PC-9 (cell line): ENCODE measurements at regions of chr7 and their contacts with region 1.

Region 1: DNA sequence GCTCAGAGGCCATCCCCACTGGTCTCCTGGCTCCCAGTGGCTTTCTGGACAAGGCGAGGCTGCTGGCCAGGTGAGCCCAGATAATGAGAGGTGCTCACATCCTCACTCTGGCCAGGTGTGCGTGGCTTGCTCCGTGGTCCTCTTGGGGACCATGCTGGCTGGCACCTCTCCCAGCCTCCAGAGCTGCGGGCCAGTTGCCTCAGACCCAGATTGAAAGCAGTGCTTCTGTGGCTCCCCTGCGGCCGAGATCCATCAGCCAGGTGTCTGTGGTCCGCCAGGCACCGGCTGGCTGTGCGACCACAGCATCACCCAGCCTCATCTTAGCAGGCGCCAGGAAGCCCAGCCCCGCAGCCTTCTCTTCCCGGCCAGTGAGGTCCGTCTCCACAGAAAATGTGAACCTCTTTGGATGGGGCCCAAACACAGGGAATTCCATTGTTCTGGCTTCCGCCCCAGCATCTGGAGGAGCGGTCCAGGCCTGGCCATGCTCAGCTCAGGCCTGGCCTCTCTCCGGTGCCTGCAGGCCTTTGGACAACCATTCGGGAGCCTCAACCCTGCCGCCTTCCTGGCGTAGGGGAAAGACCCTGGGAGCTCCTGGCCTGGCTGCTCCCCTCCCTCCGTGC is 5.2 kb upstream of the TTYH3 start:
- DNase-seq: no peak
- H3K4me3 ChIP-seq: no peak overlapping the region
- H3K27ac ChIP-seq: no peak overlapping the region
- H3K4me1 ChIP-seq: peaks cover 5% of the 10 kb centered on the region
- H3K27me3 ChIP-seq: no peaks in the 10 kb centered on the region
- CTCF ChIP-seq: no peak

Region 2: GRCh38 chr7:1459522-1459892 is 1167.1 kb before region 1 on chr7:
- CTCF ChIA-PET with region 1: no interaction called
- POLR2A ChIA-PET with region 1: interaction called, 17 read pairs
- intact Hi-C with region 1: no loop called
- DNase-seq: peak; percentile 92 to 100
- H3K4me3 ChIP-seq: peak overlapping the region; percentile 97; the same call in 1 of the 2 replicates
- H3K27ac ChIP-seq: no peak overlapping the region
- H3K4me1 ChIP-seq: peaks cover 39% of the 10 kb centered on the region
- H3K27me3 ChIP-seq: no peaks in the 10 kb centered on the region
- CTCF ChIP-seq: no peak

Region 3: DNA sequence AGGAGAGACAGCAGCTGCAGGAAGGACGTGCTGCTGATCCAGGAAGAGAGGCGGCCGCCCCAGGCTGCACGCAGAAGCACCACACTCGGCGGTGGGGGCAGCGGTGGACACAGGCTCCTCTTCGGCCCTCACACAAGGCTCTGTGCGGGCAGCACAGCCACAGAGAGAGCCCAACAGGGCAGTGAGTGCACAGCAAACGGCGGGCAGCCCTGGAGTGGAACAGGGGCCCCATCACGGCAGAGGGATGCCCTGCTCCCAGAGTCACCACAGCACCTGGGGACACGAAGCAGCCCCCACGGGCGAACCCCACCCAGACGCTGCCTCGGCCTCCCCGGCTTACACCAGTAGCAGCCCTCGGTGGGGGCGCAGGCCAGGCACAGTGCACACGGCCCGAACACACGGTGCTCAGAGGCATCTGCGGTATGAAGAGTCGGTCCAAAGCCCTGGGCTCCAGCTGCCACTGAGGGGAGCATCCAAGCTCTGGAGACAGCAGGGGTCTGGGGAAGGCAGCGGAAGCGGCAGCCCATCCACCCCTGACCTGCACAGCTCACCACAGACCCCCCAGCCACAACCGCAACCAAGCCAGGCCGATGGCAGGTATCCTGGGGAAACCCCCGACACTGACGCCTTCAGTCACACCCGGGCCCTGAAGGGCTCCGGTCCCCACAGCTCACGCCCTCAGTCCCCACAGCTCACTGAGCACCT is 367.8 kb before region 1 on chr7:
- CTCF ChIA-PET with region 1: interaction called, 10 read pairs
- POLR2A ChIA-PET with region 1: no interaction called
- intact Hi-C with region 1: no loop called
- DNase-seq: no peak
- H3K4me3 ChIP-seq: no peak overlapping the region
- H3K27ac ChIP-seq: no peak overlapping the region
- H3K4me1 ChIP-seq: peaks cover 54% of the 10 kb centered on the region
- H3K27me3 ChIP-seq: no peaks in the 10 kb centered on the region
- CTCF ChIP-seq: no peak

Region 4: DNA sequence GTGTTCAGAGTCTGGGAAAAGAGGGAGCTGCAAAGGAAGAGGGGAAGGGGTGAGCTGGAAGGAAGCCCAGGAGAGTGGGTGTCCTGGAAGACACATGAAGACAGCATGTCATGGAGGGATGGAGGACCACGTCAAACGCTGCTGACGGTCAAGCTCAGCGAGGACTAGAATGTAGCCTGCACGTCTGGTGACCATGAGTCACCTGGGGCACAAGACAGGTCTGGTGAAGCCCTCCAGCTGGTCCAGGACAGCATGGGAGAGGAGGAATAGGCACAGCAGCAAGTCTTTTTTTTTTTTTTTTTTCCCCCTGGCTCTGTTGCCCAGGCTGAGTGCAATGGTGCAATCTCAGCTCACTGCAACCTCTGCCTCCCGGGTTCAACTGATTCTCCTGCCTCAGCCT is 41.8 kb after region 1 on chr7:
- CTCF ChIA-PET with region 1: interaction called, 13 read pairs
- POLR2A ChIA-PET with region 1: interaction called, 3 read pairs
- intact Hi-C with region 1: no loop called
- DNase-seq: peak; percentile 55
- H3K4me3 ChIP-seq: no peak overlapping the region
- H3K27ac ChIP-seq: no peak overlapping the region
- H3K4me1 ChIP-seq: 0 out of 2 replicates have a peak, but pooled peaks cover 5% of the 10 kb centered on the region
- H3K27me3 ChIP-seq: no peaks in the 10 kb centered on the region
- CTCF ChIP-seq: no peak

Region 5: DNA sequence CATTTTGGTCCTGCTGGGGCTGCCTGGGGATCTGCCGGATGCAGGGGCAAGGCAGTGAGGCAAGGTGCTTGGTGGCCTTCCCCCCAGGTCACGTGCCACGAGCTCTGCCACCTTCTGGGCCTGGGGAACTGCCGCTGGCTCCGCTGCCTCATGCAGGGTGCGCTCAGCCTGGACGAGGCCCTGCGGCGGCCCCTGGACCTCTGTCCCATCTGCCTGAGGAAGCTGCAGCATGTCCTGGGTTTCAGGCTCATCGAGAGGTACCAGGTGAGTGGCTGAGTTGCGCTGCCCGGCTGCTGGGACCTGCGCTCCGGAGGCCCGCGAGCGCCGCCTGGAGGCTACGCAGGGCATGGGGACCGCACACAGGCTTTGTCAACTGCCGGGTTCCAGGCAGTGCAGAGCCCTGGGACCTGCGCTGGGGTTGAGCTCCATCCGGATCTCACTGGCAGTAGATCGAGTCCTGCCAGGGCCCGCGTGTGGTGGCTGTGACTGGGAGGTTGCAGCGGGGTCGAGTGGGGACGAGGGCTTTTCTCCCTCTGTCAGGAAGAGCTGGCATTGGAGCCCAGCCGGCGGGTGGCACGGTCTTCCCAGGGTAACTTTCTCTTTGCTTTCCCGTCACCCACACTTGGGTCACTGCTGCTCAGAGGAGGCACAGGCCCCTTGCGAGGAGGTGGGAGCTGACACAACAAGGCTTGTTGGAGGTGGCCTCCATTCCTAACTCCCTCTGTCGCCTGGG is 83.1 kb after region 1 on chr7:
- CTCF ChIA-PET with region 1: no interaction called
- POLR2A ChIA-PET with region 1: no interaction called
- intact Hi-C with region 1: no loop called
- DNase-seq: peak in 1 of 2 experiments; percentile 85
- H3K4me3 ChIP-seq: no peak overlapping the region
- H3K27ac ChIP-seq: no peak overlapping the region
- H3K4me1 ChIP-seq: no peaks in the 10 kb centered on the region
- H3K27me3 ChIP-seq: no peaks in the 10 kb centered on the region
- CTCF ChIP-seq: peak; percentile 66

Region 6: DNA sequence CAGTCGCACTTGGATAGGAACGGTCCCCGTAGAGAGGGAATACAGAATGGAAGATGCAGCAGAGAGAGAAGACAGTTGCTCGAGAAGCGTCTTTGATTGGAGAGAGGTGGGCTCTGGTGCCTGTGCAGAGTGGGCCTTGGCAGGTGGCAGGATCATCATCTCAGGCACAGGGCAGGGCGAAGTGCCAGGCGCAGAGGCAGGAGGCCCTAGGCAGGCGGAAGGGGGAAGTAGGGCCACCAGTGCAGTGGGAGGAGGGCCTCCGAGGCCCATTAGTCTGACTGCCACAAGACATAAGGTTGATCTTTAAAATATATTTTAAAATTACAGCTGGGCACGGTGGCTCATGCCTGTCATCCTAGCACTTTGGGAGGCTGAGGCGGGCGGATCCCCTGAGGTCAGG is 407.0 kb after region 1 on chr7:
- CTCF ChIA-PET with region 1: no interaction called
- POLR2A ChIA-PET with region 1: no interaction called
- intact Hi-C with region 1: no loop called
- DNase-seq: no peak
- H3K4me3 ChIP-seq: no peak overlapping the region
- H3K27ac ChIP-seq: no peak overlapping the region
- H3K4me1 ChIP-seq: peaks cover 11% of the 10 kb centered on the region
- H3K27me3 ChIP-seq: no peaks in the 10 kb centered on the region
- CTCF ChIP-seq: no peak